PC-3 (cell line): ENCODE measurements at regions of chr7 and their contacts with region 1.

Region 1: DNA sequence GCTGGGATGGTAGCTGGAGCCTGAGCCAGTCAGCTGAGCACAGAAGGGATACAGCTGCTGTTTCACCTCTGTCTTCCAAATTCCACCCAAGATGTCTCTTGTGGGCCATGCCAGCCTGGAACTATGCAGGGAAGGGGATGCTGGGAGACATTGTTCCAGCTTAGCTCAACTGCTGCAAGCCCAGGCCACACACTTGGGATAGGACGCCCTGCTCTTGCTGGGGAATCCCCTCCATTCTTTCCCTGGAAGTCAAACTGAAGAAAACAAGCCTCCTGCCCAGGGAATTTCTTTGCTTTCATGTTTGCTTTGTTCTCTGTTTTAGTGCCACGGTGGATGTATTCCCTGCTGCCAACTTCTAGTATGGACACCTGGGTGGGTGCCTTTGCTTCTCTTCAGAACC is 55.2 kb upstream of the CDK13 start:
- DNase-seq: no peak
- ATAC-seq: no peak
- H3K4me3 ChIP-seq: no peak overlapping the region
- H3K27ac ChIP-seq: no peak overlapping the region
- H3K4me1 ChIP-seq: peaks cover 23% of the 10 kb centered on the region
- H3K27me3 ChIP-seq: 0 out of 2 replicates have a peak, but pooled peaks cover 5% of the 10 kb centered on the region
- CTCF ChIP-seq: no peak

Region 2: DNA sequence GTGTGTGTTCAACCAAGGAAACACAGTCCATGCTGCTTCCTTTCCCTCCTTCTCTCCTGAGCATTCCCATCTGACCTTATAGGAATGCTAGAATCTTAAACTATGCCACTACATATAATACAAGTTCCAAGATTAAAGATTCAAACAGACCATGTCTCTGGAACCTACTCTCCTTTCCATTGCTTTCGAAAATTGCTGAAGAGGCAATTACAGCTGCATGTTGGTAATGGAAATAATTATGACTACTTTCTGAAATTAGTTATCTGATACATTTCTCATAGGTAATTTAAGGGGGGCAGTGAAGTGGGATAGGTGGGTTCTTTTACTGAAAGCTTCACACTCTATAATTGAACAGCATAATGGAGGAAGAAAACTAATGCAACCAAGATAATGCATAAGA is 614.6 kb before region 1 on chr7:
- CTCF ChIA-PET with region 1: no interaction called
- POLR2A ChIA-PET with region 1: no interaction called
- intact Hi-C with region 1: no loop called
- DNase-seq: no peak
- ATAC-seq: no peak
- H3K4me3 ChIP-seq: no peak overlapping the region
- H3K27ac ChIP-seq: no peak overlapping the region
- H3K4me1 ChIP-seq: no peaks in the 10 kb centered on the region
- H3K27me3 ChIP-seq: 0 out of 2 replicates have a peak, but pooled peaks cover 12% of the 10 kb centered on the region
- CTCF ChIP-seq: no peak

Region 3: GRCh38 chr7:39910108-39910869 is 15.4 kb after region 1 on chr7:
- CTCF ChIA-PET with region 1: interaction called, 13 read pairs
- POLR2A ChIA-PET with region 1: no interaction called
- intact Hi-C with region 1: no loop called
- DNase-seq: no peak
- ATAC-seq: no peak
- H3K4me3 ChIP-seq: no peak overlapping the region
- H3K27ac ChIP-seq: no peak overlapping the region
- H3K4me1 ChIP-seq: no peaks in the 10 kb centered on the region
- H3K27me3 ChIP-seq: no peaks in the 10 kb centered on the region
- CTCF ChIP-seq: no peak

Region 4: GRCh38 chr7:39987476-39988347 is 92.8 kb after region 1 on chr7:
- CTCF ChIA-PET with region 1: no interaction called
- POLR2A ChIA-PET with region 1: no interaction called
- intact Hi-C with region 1: no loop called
- DNase-seq: no peak
- ATAC-seq: no peak
- H3K4me3 ChIP-seq: no peak overlapping the region
- H3K27ac ChIP-seq: no peak overlapping the region
- H3K4me1 ChIP-seq: no peaks in the 10 kb centered on the region
- H3K27me3 ChIP-seq: no peaks in the 10 kb centered on the region
- CTCF ChIP-seq: no peak

Region 5: DNA sequence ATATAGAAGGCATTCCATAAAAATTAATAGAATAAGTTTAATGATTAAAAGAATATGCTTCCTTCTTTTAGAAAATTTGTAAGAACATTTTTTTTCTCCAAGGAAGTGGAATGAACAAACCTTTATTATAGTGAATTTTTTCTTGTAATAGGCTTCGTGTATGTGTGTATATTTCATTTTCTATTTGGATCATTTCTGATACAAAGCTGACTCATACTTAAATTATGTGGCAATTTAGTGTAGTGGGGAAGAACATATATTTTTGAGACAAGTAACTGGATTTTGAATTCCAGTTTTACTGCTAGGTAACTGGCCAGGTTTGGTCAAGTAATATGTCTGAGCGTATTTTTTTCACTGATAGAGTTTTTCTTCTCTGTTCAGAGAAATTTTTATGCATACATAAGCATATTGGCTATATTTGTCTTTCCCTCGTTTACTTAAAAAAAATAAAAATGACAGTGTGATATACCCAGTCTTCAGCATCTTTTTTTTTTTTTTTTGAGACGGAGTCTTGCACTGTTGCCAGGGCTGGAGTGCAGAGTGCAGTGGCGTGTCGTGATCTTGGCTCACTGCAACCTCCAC is 105.9 kb after region 1 on chr7:
- CTCF ChIA-PET with region 1: no interaction called
- POLR2A ChIA-PET with region 1: no interaction called
- intact Hi-C with region 1: no loop called
- DNase-seq: peak; percentile 10
- ATAC-seq: peak; percentile 78
- H3K4me3 ChIP-seq: no peak overlapping the region
- H3K27ac ChIP-seq: no peak overlapping the region
- H3K4me1 ChIP-seq: peaks cover 4% of the 10 kb centered on the region; the same call in 1 of the 2 replicates
- H3K27me3 ChIP-seq: no peaks in the 10 kb centered on the region
- CTCF ChIP-seq: no peak

Region 6: GRCh38 chr7:40057292-40057691 is 162.4 kb after region 1 on chr7:
- CTCF ChIA-PET with region 1: interaction called, 21 read pairs
- POLR2A ChIA-PET with region 1: no interaction called
- intact Hi-C with region 1: loop called (anchors 1 kb)
- DNase-seq: no peak
- ATAC-seq: no peak
- H3K4me3 ChIP-seq: no peak overlapping the region
- H3K27ac ChIP-seq: no peak overlapping the region
- H3K4me1 ChIP-seq: no peaks in the 10 kb centered on the region
- H3K27me3 ChIP-seq: no peaks in the 10 kb centered on the region
- CTCF ChIP-seq: no peak